ENCODE measurements at regions of chr10 and their contacts with region 1.

Region 1: GRCh38 chr10:80699602-80700039 is 161.9 kb downstream of the SH2D4B start:
- DNase-seq: peak; percentile 49 to 77 (median 60)
- ATAC-seq: peak; percentile 62
- H3K4me3 ChIP-seq: no peak overlapping the region
- H3K4me3 Mint-ChIP-seq: no peak overlapping the region
- H3K27ac ChIP-seq: no peak overlapping the region
- H3K27ac Mint-ChIP-seq: no peak overlapping the region
- H3K4me1 ChIP-seq: peaks cover 3% of the 10 kb centered on the region
- H3K4me1 Mint-ChIP-seq: no peaks in the 10 kb centered on the region
- H3K27me3 ChIP-seq: no peaks in the 10 kb centered on the region
- H3K27me3 Mint-ChIP-seq: no peaks in the 10 kb centered on the region
- CTCF ChIP-seq: peak; percentile 84

Region 2: GRCh38 chr10:79602953-79603352 is 1096.7 kb before region 1 on chr10:
- CTCF ChIA-PET with region 1: no interaction called
- POLR2A ChIA-PET with region 1: no interaction called
- intact Hi-C with region 1: loop called in 1 of 2 experiments (anchors 5 kb)
- DNase-seq: no peak
- ATAC-seq: no peak
- H3K4me3 ChIP-seq: no peak overlapping the region
- H3K4me3 Mint-ChIP-seq: no peak overlapping the region
- H3K27ac ChIP-seq: no peak overlapping the region
- H3K27ac Mint-ChIP-seq: no peak overlapping the region
- H3K4me1 ChIP-seq: no peaks in the 10 kb centered on the region
- H3K4me1 Mint-ChIP-seq: no peaks in the 10 kb centered on the region
- H3K27me3 ChIP-seq: no peaks in the 10 kb centered on the region
- H3K27me3 Mint-ChIP-seq: peaks cover 10% of the 10 kb centered on the region
- CTCF ChIP-seq: no peak

Region 3: GRCh38 chr10:80599424-80599847 is 100.2 kb before region 1 on chr10:
- CTCF ChIA-PET with region 1: no interaction called
- POLR2A ChIA-PET with region 1: no interaction called
- intact Hi-C with region 1: no loop called
- DNase-seq: peak in 6 of 14 experiments; percentile 6 to 63 (median 29)
- ATAC-seq: peak; percentile 48
- H3K4me3 ChIP-seq: no peak overlapping the region
- H3K4me3 Mint-ChIP-seq: no peak overlapping the region
- H3K27ac ChIP-seq: no peak overlapping the region
- H3K27ac Mint-ChIP-seq: no peak overlapping the region
- H3K4me1 ChIP-seq: no peaks in the 10 kb centered on the region
- H3K4me1 Mint-ChIP-seq: no peaks in the 10 kb centered on the region
- H3K27me3 ChIP-seq: no peaks in the 10 kb centered on the region
- H3K27me3 Mint-ChIP-seq: no peaks in the 10 kb centered on the region
- CTCF ChIP-seq: peak; percentile 15

Region 4: DNA sequence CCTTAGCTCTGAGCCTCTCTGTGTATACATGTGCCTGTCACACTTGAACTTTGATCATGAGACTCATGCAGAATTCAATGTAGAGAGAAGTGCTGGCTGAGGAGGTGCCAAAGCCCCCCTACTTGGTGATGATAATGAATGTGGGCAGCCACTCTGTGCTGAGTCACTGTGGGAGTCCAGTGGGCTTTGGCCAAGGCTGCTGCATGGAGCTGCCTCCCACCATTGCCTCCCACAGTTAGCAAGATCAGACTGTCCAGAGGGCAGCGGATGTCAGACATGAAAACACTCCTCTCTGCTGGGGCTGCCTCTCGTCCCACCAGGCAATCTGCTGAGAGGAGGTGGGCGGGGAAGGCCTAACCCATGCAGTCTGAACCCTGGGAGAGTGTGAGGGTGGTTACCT is 18.4 kb after region 1 on chr10:
- CTCF ChIA-PET with region 1: no interaction called
- POLR2A ChIA-PET with region 1: no interaction called
- intact Hi-C with region 1: no loop called
- DNase-seq: no peak
- ATAC-seq: no peak
- H3K4me3 ChIP-seq: no peak overlapping the region
- H3K4me3 Mint-ChIP-seq: no peak overlapping the region
- H3K27ac ChIP-seq: no peak overlapping the region
- H3K27ac Mint-ChIP-seq: no peak overlapping the region
- H3K4me1 ChIP-seq: no peaks in the 10 kb centered on the region
- H3K4me1 Mint-ChIP-seq: no peaks in the 10 kb centered on the region
- H3K27me3 ChIP-seq: no peaks in the 10 kb centered on the region
- H3K27me3 Mint-ChIP-seq: peaks cover 19% of the 10 kb centered on the region
- CTCF ChIP-seq: no peak

Region 5: GRCh38 chr10:80739963-80740715 is 40.5 kb after region 1 on chr10:
- CTCF ChIA-PET with region 1: no interaction called
- POLR2A ChIA-PET with region 1: no interaction called
- intact Hi-C with region 1: no loop called
- DNase-seq: no peak
- ATAC-seq: no peak
- H3K4me3 ChIP-seq: no peak overlapping the region
- H3K4me3 Mint-ChIP-seq: no peak overlapping the region
- H3K27ac ChIP-seq: no peak overlapping the region
- H3K27ac Mint-ChIP-seq: no peak overlapping the region
- H3K4me1 ChIP-seq: no peaks in the 10 kb centered on the region
- H3K4me1 Mint-ChIP-seq: no peaks in the 10 kb centered on the region
- H3K27me3 ChIP-seq: no peaks in the 10 kb centered on the region
- H3K27me3 Mint-ChIP-seq: peaks cover 14% of the 10 kb centered on the region
- CTCF ChIP-seq: no peak

Region 6: DNA sequence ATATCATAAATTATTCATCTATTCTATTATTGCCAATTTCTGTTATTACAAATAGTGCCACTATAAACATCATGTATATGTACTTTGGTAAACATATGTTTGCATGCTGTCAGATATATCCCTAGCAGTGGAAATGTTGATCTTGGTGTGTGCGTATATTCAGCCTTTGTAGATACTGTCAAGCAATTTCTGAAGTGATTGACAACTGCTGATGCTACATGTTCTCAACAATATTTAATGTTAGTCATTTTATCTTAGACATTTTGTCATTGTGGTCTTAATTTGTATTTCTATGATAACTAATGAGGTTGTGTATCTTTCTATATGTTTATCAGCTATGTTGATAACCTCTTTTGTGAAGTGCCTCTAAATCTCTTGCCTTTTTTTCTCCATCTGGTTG is 988.8 kb after region 1 on chr10:
- CTCF ChIA-PET with region 1: no interaction called
- POLR2A ChIA-PET with region 1: no interaction called
- intact Hi-C with region 1: no loop called
- DNase-seq: no peak
- ATAC-seq: no peak
- H3K4me3 ChIP-seq: no peak overlapping the region
- H3K4me3 Mint-ChIP-seq: no peak overlapping the region
- H3K27ac ChIP-seq: no peak overlapping the region
- H3K27ac Mint-ChIP-seq: no peak overlapping the region
- H3K4me1 ChIP-seq: no peaks in the 10 kb centered on the region
- H3K4me1 Mint-ChIP-seq: no peaks in the 10 kb centered on the region
- H3K27me3 ChIP-seq: no peaks in the 10 kb centered on the region
- H3K27me3 Mint-ChIP-seq: no peaks in the 10 kb centered on the region
- CTCF ChIP-seq: no peak

Region 7: GRCh38 chr10:81820420-81820819 is 1120.8 kb after region 1 on chr10:
- CTCF ChIA-PET with region 1: no interaction called
- POLR2A ChIA-PET with region 1: no interaction called
- intact Hi-C with region 1: loop called in 1 of 2 experiments (anchors 10 kb)
- DNase-seq: peak in 2 of 14 experiments; percentile 7 to 22
- ATAC-seq: no peak
- H3K4me3 ChIP-seq: no peak overlapping the region
- H3K4me3 Mint-ChIP-seq: no peak overlapping the region
- H3K27ac ChIP-seq: no peak overlapping the region
- H3K27ac Mint-ChIP-seq: no peak overlapping the region
- H3K4me1 ChIP-seq: no peaks in the 10 kb centered on the region
- H3K4me1 Mint-ChIP-seq: no peaks in the 10 kb centered on the region
- H3K27me3 ChIP-seq: no peaks in the 10 kb centered on the region
- H3K27me3 Mint-ChIP-seq: no peaks in the 10 kb centered on the region
- CTCF ChIP-seq: no peak

Measured in CD4-positive, alpha-beta T cell (primary cell).